GM10248 (cell line): ENCODE measurements at regions of chr12 and their contacts with region 1.

Region 1: DNA sequence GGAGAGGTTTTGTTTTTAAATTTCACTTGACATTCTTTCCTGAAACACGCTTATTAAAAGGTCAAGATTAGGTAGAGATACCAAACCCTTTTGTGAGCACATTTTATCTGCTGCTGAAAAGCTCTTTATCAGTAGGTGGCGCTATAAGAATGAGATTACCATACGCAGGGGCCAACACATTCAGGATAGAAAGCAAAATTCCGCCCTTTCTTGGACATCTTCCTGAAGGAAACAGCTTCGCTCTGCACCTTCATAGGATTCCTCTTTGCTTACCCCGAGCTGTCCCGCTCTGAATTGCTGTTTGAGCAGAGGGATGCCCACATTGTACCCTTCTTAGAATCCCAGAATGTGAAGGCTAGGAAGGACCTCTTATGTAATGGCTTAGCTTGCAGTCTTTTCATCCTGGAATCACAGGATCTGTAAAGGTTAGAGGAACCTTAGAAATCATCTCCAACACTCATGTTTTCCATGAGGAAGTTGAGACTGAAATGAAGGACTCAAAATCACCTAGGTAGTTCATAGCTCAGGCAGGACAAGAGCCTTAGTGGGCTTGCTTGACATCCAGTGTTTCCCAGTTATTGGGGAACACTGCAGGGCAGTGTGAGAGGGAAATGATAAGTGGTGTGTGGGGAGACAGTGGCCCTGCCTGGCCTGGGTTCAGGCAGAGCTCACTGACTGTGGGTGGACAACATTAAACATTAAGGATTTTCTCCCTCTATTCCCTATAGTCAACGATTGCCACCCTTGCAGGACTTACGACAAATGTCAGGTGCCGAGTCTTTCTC is 38.7 kb upstream of the CRY1 start:
- DNase-seq: peak; percentile 51
- CTCF ChIP-seq: peak; percentile 81

Region 2: GRCh38 chr12:107109741-107110719 is 22.0 kb before region 1 on chr12:
- CTCF ChIA-PET with region 1: interaction called, 26 read pairs
- POLR2A ChIA-PET with region 1: no interaction called
- DNase-seq: no peak
- CTCF ChIP-seq: no peak

Region 3: GRCh38 chr12:107145397-107145796 is 13.4 kb after region 1 on chr12:
- CTCF ChIA-PET with region 1: interaction called, 38 read pairs
- POLR2A ChIA-PET with region 1: no interaction called
- DNase-seq: no peak
- CTCF ChIP-seq: no peak

Region 4: GRCh38 chr12:107402041-107403022 is 270.3 kb after region 1 on chr12:
- CTCF ChIA-PET with region 1: interaction called, 65 read pairs
- POLR2A ChIA-PET with region 1: no interaction called
- DNase-seq: peak; percentile 45
- CTCF ChIP-seq: peak; percentile 61

Region 5: DNA sequence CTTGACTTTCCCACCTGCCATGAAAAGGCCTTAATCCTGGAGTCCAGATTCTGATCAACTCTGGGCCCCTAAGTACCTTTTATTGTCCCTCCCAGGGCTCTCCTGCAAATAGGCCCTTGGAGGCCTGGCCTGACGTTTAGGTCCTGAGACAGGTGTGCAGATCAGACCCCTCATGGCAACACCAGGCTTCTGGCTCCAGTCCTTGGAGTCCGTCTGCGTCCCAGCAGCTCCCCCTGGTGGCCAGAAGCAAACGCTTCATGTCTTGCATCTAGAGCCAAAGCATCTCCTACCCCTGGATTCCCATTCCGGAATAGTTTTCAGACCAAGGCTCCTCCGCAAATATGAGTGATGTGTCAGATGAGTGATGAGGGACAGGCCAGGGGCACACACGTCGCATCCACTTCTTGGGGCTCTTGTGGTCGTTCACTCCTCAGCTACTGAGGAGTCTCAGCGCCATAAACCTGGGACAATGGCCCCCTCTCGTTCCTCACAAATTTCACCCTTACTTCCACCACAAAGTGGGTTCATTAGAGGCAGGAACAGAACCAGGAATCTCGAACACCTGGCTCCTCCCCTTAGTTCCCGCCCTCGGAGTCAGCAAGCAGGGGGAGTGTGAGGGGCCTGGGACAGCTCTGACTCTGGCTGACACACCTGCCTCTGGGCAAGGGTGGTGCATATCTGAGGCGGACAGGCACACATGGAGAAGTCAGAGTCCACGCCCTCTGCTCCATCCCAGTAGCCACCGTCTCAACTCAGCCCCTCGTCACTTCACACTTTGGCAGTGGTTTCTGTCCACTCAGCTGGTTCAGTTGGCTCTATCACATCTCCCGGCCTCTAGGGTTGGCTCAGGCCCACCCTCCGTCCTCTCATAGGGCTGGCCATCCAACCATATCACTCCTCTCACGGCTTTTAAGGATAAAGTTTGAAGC is 475.7 kb after region 1 on chr12:
- CTCF ChIA-PET with region 1: interaction called, 281 read pairs
- POLR2A ChIA-PET with region 1: no interaction called
- DNase-seq: peak; percentile 80
- CTCF ChIP-seq: peak; percentile 92